ENCODE measurements at regions of chr16 and their contacts with region 1.

Region 1: GRCh38 chr16:29757950-29758466 is 12.2 kb upstream of the C16orf54 start:
- DNase-seq: no peak
- H3K4me3 ChIP-seq: no peak overlapping the region
- H3K27ac ChIP-seq: no peak overlapping the region
- H3K4me1 ChIP-seq: no peaks in the 10 kb centered on the region
- H3K27me3 ChIP-seq: no peaks in the 10 kb centered on the region
- CTCF ChIP-seq: no peak
- EP300 ChIP-seq: no peak
- POLR2A ChIP-seq: no peak
- RAD21 ChIP-seq: no peak

Region 2: GRCh38 chr16:29738514-29738913 is 19.5 kb before region 1 on chr16:
- CTCF ChIA-PET with region 1: interaction called, 3 read pairs
- POLR2A ChIA-PET with region 1: interaction called, 17 read pairs
- DNase-seq: no peak
- H3K4me3 ChIP-seq: no peak overlapping the region
- H3K27ac ChIP-seq: no peak overlapping the region
- H3K4me1 ChIP-seq: no peaks in the 10 kb centered on the region; a peak in 1 of 7 replicates
- H3K27me3 ChIP-seq: no peaks in the 10 kb centered on the region
- CTCF ChIP-seq: no peak
- EP300 ChIP-seq: no peak
- POLR2A ChIP-seq: 0 out of 3 replicates have a peak, but pooled peaks of 1 of the 2 experiments have one; percentile 35
- RAD21 ChIP-seq: no peak

Region 3: DNA sequence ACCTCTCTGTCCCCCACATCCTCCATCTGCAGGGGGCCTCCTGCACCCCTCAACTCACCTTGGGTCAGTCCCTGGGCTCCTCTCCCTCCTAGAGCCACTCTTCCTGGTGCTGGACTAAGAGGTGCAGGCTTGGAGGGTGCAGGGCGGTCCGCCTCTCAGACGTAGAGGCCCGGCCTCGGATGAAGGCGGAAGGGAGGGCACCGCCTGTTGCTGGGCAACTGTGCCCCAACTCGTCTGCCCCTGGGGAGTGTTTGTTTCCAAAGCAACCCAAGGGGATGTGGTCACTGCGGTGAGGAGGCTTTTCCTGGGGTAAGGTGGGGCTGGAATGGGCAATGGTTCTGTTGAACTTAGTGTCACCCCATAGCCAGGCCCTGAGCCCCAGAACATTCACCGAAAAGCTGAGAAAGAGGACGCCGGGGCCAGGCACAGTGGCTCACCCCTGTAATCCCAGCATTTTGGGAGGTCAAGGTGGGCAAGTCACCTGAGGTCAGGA is 12.1 kb before region 1 on chr16 and contains the start of gene C16orf54:
- CTCF ChIA-PET with region 1: interaction called, 3 read pairs
- POLR2A ChIA-PET with region 1: interaction called, 17 read pairs
- DNase-seq: peak in 1 of 2 experiments; percentile 65
- H3K4me3 ChIP-seq: no peak within 1 kb of the TSS
- H3K27ac ChIP-seq: no peak within 1 kb of the TSS
- H3K4me1 ChIP-seq: peaks cover 0 to 4% (median 2%) of the 10 kb centered on the region in 4 experiments; a peak in 4 of 7 replicates
- H3K27me3 ChIP-seq: no peaks in the 10 kb centered on the region
- CTCF ChIP-seq: no peak
- EP300 ChIP-seq: no peak
- POLR2A ChIP-seq: no peak
- RAD21 ChIP-seq: no peak
- total RNA-seq, gene C16orf54: not detected in 2 replicates

Region 4: DNA sequence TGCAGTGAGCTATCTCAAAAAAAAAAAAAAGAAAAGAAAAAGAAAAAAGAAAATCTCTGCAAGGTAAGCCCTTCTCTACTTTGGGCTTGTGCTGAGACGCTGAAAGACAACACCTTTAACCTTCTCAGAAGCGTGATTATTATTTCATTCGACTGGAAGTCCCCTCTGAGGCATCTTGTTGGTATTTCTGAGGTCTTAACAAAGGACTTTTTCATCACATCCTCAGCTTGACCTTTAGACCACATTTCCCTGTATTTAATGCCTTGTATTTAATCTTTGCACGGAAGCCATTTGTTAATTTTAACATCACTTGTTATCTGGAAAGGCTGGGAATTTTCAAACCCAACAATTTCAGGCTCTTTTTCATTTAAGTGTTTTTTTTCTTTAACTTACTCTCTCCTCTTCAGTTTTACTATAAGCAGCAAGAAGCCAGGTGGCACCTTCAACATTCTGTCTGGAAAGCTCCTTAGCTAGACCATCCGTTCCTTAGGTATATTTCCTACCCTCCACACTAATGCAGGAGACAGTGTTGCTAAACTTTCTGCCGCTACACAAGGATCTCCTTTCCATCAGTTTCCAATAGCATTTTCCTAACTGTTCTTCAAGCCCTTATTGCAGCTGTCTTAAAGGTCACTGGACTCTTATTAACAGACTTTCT is 157.7 kb after region 1 on chr16:
- CTCF ChIA-PET with region 1: no interaction called
- POLR2A ChIA-PET with region 1: no interaction called
- DNase-seq: no peak
- H3K4me3 ChIP-seq: no peak overlapping the region
- H3K27ac ChIP-seq: no peak overlapping the region
- H3K4me1 ChIP-seq: peaks cover 0 to 5% (median 1%) of the 10 kb centered on the region in 4 experiments; a peak in 1 of 7 replicates
- H3K27me3 ChIP-seq: no peaks in the 10 kb centered on the region
- CTCF ChIP-seq: no peak
- EP300 ChIP-seq: no peak
- POLR2A ChIP-seq: no peak
- RAD21 ChIP-seq: no peak

Measured in H1 (cell line).